ENCODE measurements at regions of chr11 and their contacts with region 1.

Region 1: GRCh38 chr11:124953753-124954589 is at the start of gene CCDC15:
- DNase-seq: peak; percentile 92
- H3K4me3 ChIP-seq: peak within 1 kb of the TSS; percentile 61
- H3K27ac ChIP-seq: peak within 1 kb of the TSS; percentile 87
- H3K27me3 ChIP-seq: no peaks in the 10 kb centered on the region
- CTCF ChIP-seq: no peak
- polyA plus RNA-seq, gene CCDC15: 0.73 and 1.1 TPM in 2 replicates

Region 2: GRCh38 chr11:124900464-124900863 is 53.5 kb before region 1 on chr11:
- CTCF ChIA-PET with region 1: no interaction called
- POLR2A ChIA-PET with region 1: interaction called, 12 read pairs
- DNase-seq: peak; percentile 68
- H3K4me3 ChIP-seq: peak overlapping the region; percentile 1; the same call in 1 of the 2 replicates
- H3K27ac ChIP-seq: peak overlapping the region; percentile 99
- H3K27me3 ChIP-seq: no peaks in the 10 kb centered on the region
- CTCF ChIP-seq: no peak

Region 3: GRCh38 chr11:124934862-124935547 is 19.0 kb before region 1 on chr11:
- CTCF ChIA-PET with region 1: interaction called, 7 read pairs
- POLR2A ChIA-PET with region 1: interaction called, 22 read pairs
- DNase-seq: peak; percentile 86
- H3K4me3 ChIP-seq: no peak overlapping the region; the same call in 1 of the 2 replicates
- H3K27ac ChIP-seq: peak overlapping the region; percentile 94
- H3K27me3 ChIP-seq: no peaks in the 10 kb centered on the region
- CTCF ChIP-seq: peak; percentile 52

Region 4: DNA sequence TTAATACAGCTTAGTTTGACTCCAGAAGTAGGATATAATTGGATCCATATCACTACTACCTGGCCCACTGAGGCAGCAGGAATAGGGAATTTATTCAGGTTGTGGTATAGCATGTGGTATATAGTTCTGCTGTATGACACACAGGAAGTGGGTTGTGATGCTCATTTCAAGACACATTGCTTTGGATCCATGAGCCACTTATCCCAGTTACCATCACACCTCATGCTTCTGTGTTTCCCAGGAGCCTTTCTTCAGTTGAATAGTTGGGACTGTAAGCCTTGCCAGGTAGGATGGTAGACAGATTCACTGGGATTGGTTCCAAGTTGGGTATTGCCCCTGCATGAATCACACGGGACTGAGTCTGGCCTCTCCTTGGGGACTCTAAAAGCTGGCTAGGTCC is 99.2 kb after region 1 on chr11:
- CTCF ChIA-PET with region 1: no interaction called
- POLR2A ChIA-PET with region 1: no interaction called
- DNase-seq: no peak
- H3K4me3 ChIP-seq: no peak overlapping the region
- H3K27ac ChIP-seq: no peak overlapping the region
- H3K27me3 ChIP-seq: no peaks in the 10 kb centered on the region
- CTCF ChIP-seq: no peak